Breast epithelium (tissue), 4 donors: ENCODE measurements at regions of chr10 and their contacts with region 1.

Region 1: GRCh38 chr10:45378914-45379726 is 5.1 kb downstream of the ALOX5 start:
- DNase-seq: no peak
- H3K4me3 ChIP-seq: no peak overlapping the region
- H3K27ac ChIP-seq: no peak overlapping the region
- H3K4me1 ChIP-seq: peaks cover 0 to 7% of the 10 kb centered on the region in 2 donors
- H3K27me3 ChIP-seq: peaks cover 0 to 18% of the 10 kb centered on the region in 2 donors
- CTCF ChIP-seq: no peak
- POLR2A ChIP-seq: no peak

Region 2: GRCh38 chr10:44689368-44689767 is 689.8 kb before region 1 on chr10:
- intact Hi-C with region 1: no loop called
- DNase-seq: no peak
- H3K4me3 ChIP-seq: no peak overlapping the region
- H3K27ac ChIP-seq: no peak overlapping the region
- H3K4me1 ChIP-seq: no peaks in the 10 kb centered on the region
- H3K27me3 ChIP-seq: no peaks in the 10 kb centered on the region
- CTCF ChIP-seq: no peak
- POLR2A ChIP-seq: no peak

Region 3: GRCh38 chr10:45418849-45419675 is 39.9 kb after region 1 on chr10:
- intact Hi-C with region 1: loop called (anchors 1 kb)
- DNase-seq: peak in 1 of 2 donors; percentile 41
- H3K4me3 ChIP-seq: peak overlapping the region; percentile 49 to 81 (median 62)
- H3K27ac ChIP-seq: peak overlapping the region; percentile 86 to 93
- H3K4me1 ChIP-seq: no peaks in the 10 kb centered on the region
- H3K27me3 ChIP-seq: no peaks in the 10 kb centered on the region
- CTCF ChIP-seq: no peak
- POLR2A ChIP-seq: no peak

Region 4: DNA sequence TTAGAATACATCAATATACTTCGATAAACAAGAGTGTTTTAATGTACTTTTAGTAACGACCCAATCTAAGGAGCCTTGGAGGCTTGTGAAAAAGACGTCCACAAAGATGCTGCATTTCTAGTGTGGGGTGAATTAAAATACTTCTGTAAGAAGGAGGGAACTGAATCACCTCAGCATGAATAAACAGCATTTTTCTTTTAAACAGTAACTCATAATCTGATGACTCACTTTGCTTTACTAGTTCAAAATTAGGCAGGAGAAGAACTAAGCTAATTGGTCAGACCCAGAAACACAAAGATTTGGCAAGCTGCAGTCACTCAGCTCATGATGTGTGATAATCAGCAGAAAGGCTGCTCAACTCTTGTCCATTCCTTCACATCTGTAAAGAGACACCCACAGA is 627.1 kb after region 1 on chr10:
- intact Hi-C with region 1: no loop called
- DNase-seq: no peak
- H3K4me3 ChIP-seq: no peak overlapping the region
- H3K27ac ChIP-seq: no peak overlapping the region
- H3K4me1 ChIP-seq: no peaks in the 10 kb centered on the region
- H3K27me3 ChIP-seq: no peaks in the 10 kb centered on the region
- CTCF ChIP-seq: no peak
- POLR2A ChIP-seq: no peak